ENCODE measurements at regions of chr20 and their contacts with region 1.

Region 1: GRCh38 chr20:19889011-19889953 is 127.9 kb upstream of the NAA20 start:
- DNase-seq: no peak
- ATAC-seq: peak; percentile 43
- H3K4me3 ChIP-seq: peak overlapping the region; percentile 45 to 71
- H3K27ac ChIP-seq: peak overlapping the region; percentile 98
- H3K4me1 ChIP-seq: peaks cover 26% of the 10 kb centered on the region
- H3K27me3 ChIP-seq: no peaks in the 10 kb centered on the region
- CTCF ChIP-seq: no peak

Region 2: DNA sequence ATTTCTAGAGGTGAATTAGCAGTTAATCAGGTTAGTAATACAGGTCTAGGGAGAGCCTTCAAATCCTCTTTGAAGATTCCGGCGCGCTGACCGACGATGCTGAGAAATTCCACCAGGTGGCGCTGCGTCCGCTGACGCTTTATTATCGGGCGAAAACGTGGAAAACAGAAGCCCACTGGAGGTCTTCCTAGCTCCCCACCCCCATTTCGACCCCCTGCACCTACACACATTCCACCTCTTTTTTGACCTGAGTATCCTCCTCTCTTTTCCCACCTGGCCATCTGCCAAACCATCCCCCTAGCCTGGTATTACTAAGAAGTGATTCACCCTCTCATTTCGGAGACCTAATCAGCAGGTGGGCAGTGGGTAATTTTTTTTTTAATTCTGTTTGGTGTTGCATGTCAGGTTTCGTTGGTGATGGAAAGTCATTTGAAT is 196.6 kb before region 1 on chr20:
- CTCF ChIA-PET with region 1: interaction called, 3 read pairs
- POLR2A ChIA-PET with region 1: no interaction called
- in situ Hi-C with region 1: no loop called
- intact Hi-C with region 1: loop called (anchors 5 kb)
- DNase-seq: peak; percentile 53
- ATAC-seq: peak; percentile 70
- H3K4me3 ChIP-seq: peak overlapping the region in 1 of 2 experiments; percentile 31; a peak in 2 of 4 replicates
- H3K27ac ChIP-seq: peak overlapping the region; percentile 71
- H3K4me1 ChIP-seq: peaks cover 6% of the 10 kb centered on the region
- H3K27me3 ChIP-seq: no peaks in the 10 kb centered on the region
- CTCF ChIP-seq: peak; percentile 95

Region 3: GRCh38 chr20:19815553-19815991 is 73.7 kb before region 1 on chr20:
- CTCF ChIA-PET with region 1: interaction called, 13 read pairs
- POLR2A ChIA-PET with region 1: interaction called, 3 read pairs
- in situ Hi-C with region 1: no loop called
- intact Hi-C with region 1: loop called (anchors 2 kb)
- DNase-seq: peak; percentile 93
- ATAC-seq: peak; percentile 100
- H3K4me3 ChIP-seq: no peak overlapping the region
- H3K27ac ChIP-seq: peak overlapping the region; percentile 86
- H3K4me1 ChIP-seq: peaks cover 26% of the 10 kb centered on the region
- H3K27me3 ChIP-seq: no peaks in the 10 kb centered on the region
- CTCF ChIP-seq: peak; percentile 44; the same call in 1 of the 2 replicates

Region 4: DNA sequence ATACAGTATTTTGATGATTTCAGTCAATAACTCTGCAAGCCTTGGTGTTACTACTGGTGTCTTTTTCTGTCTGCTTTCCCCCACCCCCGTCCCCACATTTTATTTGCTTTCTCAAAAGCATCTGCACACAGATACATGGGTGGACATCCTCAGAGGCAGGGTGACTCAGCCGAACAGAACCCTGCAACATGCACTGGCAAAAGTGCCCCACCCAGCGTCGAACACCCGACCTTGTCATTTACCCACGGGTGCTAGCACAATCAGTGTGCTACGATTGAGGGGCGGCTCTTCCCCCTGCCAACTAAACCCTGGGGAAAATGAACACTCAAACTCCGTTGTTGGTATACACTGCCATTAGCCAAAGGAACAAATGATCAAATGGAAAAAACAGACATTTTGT is 11.9 kb after region 1 on chr20:
- CTCF ChIA-PET with region 1: no interaction called
- POLR2A ChIA-PET with region 1: interaction called, 10 read pairs
- in situ Hi-C with region 1: no loop called
- intact Hi-C with region 1: no loop called
- DNase-seq: no peak
- ATAC-seq: no peak
- H3K4me3 ChIP-seq: no peak overlapping the region
- H3K27ac ChIP-seq: no peak overlapping the region
- H3K4me1 ChIP-seq: peaks cover 5% of the 10 kb centered on the region; the same call in 1 of the 2 replicates
- H3K27me3 ChIP-seq: no peaks in the 10 kb centered on the region
- CTCF ChIP-seq: no peak

Region 5: DNA sequence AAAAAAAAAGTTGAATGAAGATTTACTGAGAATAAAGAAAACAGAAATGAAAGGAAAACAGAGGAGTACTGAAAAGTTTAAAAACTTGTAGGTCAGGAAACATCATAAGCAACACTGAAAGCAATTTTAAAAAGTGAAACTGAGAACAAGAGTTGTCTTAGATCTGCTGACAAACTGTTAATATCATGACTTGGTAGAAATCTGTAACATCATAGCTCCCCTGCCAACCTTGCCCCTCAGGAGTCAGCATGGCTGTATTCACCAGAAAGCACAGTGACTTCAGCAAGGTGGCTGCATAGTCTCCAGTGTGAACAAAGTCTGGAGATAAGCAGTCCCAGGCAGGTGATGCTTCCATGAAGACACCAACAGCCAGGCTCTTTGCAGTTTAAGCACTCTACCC is 133.2 kb after region 1 on chr20:
- CTCF ChIA-PET with region 1: no interaction called
- POLR2A ChIA-PET with region 1: interaction called, 15 read pairs
- in situ Hi-C with region 1: no loop called
- intact Hi-C with region 1: no loop called
- DNase-seq: no peak
- ATAC-seq: no peak
- H3K4me3 ChIP-seq: no peak overlapping the region
- H3K27ac ChIP-seq: no peak overlapping the region
- H3K4me1 ChIP-seq: peaks cover 17% of the 10 kb centered on the region
- H3K27me3 ChIP-seq: no peaks in the 10 kb centered on the region
- CTCF ChIP-seq: no peak

Region 6: DNA sequence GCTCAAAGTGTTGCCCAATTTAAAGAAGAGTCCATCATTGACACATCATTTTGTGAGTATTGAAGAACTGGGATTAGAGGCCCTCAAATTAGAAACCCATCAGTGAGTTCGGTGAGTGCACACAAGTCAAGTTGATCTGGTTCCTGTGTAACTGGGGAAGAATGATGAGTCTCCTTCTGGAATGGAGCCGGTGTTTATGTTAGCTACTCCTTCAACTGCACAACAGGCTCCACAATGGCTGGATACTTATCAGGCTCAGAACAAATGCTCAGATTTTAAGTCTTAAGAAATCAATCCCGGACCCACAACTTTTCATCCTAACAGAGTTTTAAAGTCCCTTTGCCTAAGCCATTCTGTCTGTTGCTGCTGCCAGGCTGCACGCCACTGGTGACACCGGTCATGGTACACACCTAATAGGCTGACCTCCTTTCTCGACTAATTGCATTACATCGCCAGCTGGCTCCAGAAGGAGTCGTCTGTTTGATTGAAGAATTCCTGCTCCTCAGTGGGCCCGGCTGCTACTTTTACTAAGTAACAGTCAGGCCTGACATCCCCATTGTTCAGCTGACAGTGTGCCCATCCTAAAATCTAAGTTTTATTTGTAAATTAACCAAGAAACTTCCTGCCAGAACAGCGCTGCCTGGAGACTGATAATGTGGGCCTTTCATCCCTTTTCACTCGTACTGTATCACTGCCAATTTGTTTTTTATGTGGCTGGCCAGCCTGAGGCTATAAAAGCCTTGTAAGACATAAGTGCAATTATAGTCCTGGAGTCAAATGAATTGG is 609.0 kb after region 1 on chr20:
- CTCF ChIA-PET with region 1: no interaction called
- POLR2A ChIA-PET with region 1: no interaction called
- in situ Hi-C with region 1: no loop called
- intact Hi-C with region 1: no loop called
- DNase-seq: no peak
- ATAC-seq: no peak
- H3K4me3 ChIP-seq: no peak overlapping the region
- H3K27ac ChIP-seq: no peak overlapping the region
- H3K4me1 ChIP-seq: no peaks in the 10 kb centered on the region
- H3K27me3 ChIP-seq: no peaks in the 10 kb centered on the region
- CTCF ChIP-seq: no peak

Measured in Panc1 (cell line).